ENCODE measurements at regions of chr11 and their contacts with region 1.

Region 1: GRCh38 chr11:46367244-46367915 is 14.1 kb upstream of the MDK start:
- DNase-seq: peak in 1 of 2 experiments; percentile 67
- H3K4me3 ChIP-seq: no peak overlapping the region
- H3K27ac ChIP-seq: no peak overlapping the region
- H3K4me1 ChIP-seq: peaks cover 20% of the 10 kb centered on the region
- H3K27me3 ChIP-seq: no peaks in the 10 kb centered on the region
- CTCF ChIP-seq: peak; percentile 88

Region 2: GRCh38 chr11:45872513-45873356 is 494.6 kb before region 1 on chr11:
- CTCF ChIA-PET with region 1: no interaction called
- POLR2A ChIA-PET with region 1: no interaction called
- intact Hi-C with region 1: loop called (anchors 2 kb)
- DNase-seq: peak; percentile 56 to 69
- H3K4me3 ChIP-seq: no peak overlapping the region
- H3K27ac ChIP-seq: no peak overlapping the region
- H3K4me1 ChIP-seq: no peaks in the 10 kb centered on the region
- H3K27me3 ChIP-seq: no peaks in the 10 kb centered on the region
- CTCF ChIP-seq: peak; percentile 88

Region 3: GRCh38 chr11:45964911-45965389 is 402.4 kb before region 1 on chr11:
- CTCF ChIA-PET with region 1: no interaction called
- POLR2A ChIA-PET with region 1: no interaction called
- intact Hi-C with region 1: loop called (anchors 1 kb)
- DNase-seq: peak; percentile 54 to 62
- H3K4me3 ChIP-seq: no peak overlapping the region
- H3K27ac ChIP-seq: no peak overlapping the region
- H3K4me1 ChIP-seq: no peaks in the 10 kb centered on the region
- H3K27me3 ChIP-seq: no peaks in the 10 kb centered on the region
- CTCF ChIP-seq: peak; percentile 96

Region 4: GRCh38 chr11:46392421-46393230 is 25.2 kb after region 1 on chr11:
- CTCF ChIA-PET with region 1: interaction called, 11 read pairs
- POLR2A ChIA-PET with region 1: no interaction called
- intact Hi-C with region 1: no loop called
- DNase-seq: peak; percentile 66 to 86
- H3K4me3 ChIP-seq: no peak overlapping the region
- H3K27ac ChIP-seq: no peak overlapping the region
- H3K4me1 ChIP-seq: 0 out of 2 replicates have a peak, but pooled peaks cover 4% of the 10 kb centered on the region
- H3K27me3 ChIP-seq: peaks cover 22% of the 10 kb centered on the region
- CTCF ChIP-seq: no peak

Region 5: DNA sequence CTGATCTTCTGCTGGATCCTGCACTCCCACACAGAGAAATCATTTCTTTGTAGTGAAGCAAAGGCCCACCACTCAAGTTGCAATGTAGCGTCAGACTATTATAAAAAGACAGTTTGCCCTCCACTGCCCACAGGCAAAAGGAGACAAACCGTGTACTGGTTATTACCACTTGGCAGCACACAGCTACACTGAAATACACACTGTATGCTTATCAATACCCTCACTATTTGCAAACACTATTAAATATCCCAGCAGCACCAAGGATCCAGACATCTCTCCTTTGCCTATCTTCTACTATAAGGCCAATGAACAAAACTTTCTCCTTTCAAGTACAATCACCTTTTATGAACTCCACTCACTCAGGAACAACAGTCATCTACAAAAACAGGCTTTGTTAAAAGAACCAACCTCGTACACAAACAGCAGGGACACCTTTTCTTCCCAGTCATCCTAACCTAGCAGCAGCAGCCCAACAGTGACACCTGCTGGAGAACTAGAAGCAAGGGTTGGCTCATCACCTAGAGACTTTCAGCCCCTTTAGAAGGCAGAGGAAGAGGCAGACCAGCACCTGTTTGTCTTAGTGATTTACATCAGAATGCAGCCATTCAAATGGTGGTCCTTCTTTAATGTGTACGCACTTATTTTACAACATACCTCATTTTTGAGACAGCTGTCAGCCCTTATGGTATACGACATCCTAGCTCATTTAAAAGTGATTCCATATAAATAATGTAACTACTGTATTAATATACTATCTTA is 170.3 kb after region 1 on chr11:
- CTCF ChIA-PET with region 1: no interaction called
- POLR2A ChIA-PET with region 1: no interaction called
- intact Hi-C with region 1: loop called (anchors 2 kb)
- DNase-seq: peak; percentile 66 to 76
- H3K4me3 ChIP-seq: no peak overlapping the region
- H3K27ac ChIP-seq: 0 out of 2 replicates have a peak overlapping the region, but pooled peaks have one; percentile 5
- H3K4me1 ChIP-seq: peaks cover 8% of the 10 kb centered on the region; the same call in 1 of the 2 replicates
- H3K27me3 ChIP-seq: no peaks in the 10 kb centered on the region
- CTCF ChIP-seq: peak; percentile 97

Measured in PC-9 (cell line).